GM10248 (cell line): ENCODE measurements at regions of chr17 and their contacts with region 1.

Region 1: GRCh38 chr17:49694847-49695683 is 12.7 kb downstream of the SLC35B1 start:
- DNase-seq: peak; percentile 68
- CTCF ChIP-seq: peak; percentile 78

Region 2: GRCh38 chr17:49548506-49549310 is 146.4 kb before region 1 on chr17:
- CTCF ChIA-PET with region 1: no interaction called
- POLR2A ChIA-PET with region 1: no interaction called
- DNase-seq: peak; percentile 64
- CTCF ChIP-seq: peak; percentile 76

Region 3: DNA sequence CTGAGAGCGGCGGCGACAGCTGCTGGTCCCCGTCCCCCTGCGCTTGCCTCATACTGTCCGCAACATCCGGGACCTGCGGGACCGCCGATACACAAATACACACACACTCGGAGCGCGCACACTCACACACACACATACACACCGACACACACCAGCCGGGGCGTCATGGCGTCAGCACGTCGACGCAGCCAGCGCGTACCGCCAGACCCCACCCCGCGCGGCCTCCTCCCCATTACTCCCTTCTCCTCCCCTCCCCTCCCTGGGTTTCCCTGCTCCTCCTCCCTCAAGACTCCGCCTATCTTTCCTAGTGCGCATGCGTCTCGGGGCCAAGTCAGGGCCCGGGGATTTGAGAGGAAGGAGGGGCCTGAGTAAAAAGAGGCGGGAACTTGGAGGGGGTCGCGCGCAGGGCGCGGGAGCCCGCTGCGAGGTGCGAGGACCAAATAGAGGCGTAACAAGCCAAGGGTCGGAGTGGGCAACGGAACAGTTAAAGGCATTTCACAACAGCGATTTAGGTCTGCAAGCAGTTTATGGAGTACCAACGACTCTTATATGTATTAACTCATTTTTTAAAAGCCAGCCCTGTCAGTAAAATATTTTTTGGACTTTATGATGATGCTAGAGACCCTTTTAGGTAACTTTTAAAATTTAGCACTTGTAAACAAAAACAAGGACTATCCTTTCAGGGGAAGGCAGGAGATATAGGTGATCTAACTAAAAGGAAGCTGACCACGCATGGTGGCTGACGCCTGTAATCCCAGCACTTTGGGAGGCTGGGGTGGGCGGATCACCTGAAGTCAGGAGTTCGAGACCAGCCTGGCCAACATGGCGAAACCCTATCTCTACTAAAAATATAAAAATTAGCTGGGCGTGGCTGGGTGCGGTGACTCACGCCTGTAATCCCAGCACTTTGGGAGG is 16.9 kb before region 1 on chr17 and contains the start of gene SPOP:
- CTCF ChIA-PET with region 1: interaction called, 13 read pairs
- POLR2A ChIA-PET with region 1: no interaction called
- DNase-seq: peak; percentile 98
- CTCF ChIP-seq: no peak

Region 4: DNA sequence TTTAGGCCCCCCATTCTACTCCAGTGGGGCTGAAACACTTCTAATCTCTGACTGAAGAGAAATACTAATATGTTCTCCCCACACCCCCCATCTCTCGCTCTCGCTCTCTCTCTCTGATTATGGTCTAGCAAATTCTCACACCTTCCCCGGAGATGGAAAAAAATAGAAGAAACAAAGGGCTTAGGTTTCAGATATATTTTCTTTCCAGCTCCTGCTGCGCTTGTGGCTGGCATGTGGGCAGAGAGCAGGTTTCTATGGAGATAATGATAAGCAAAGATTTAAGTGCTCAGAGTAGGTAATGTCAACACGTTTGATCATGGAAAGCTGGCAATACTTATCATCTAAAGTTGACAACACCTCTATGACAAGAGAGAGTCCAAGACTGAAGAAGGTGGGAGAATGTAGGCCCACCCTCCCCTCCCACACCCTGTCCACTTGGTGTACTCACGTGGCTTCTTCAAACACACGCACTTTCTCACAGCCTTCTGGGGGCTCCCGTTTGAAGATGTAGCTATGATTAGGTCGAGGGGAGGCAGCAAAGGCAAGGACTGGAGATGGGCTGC is 20.7 kb after region 1 on chr17:
- CTCF ChIA-PET with region 1: interaction called, 138 read pairs
- POLR2A ChIA-PET with region 1: interaction called, 4 read pairs
- DNase-seq: no peak
- CTCF ChIP-seq: no peak

Region 5: GRCh38 chr17:49748791-49749190 is 53.7 kb after region 1 on chr17:
- CTCF ChIA-PET with region 1: interaction called, 13 read pairs
- POLR2A ChIA-PET with region 1: no interaction called
- DNase-seq: peak; percentile 82
- CTCF ChIP-seq: no peak

Region 6: DNA sequence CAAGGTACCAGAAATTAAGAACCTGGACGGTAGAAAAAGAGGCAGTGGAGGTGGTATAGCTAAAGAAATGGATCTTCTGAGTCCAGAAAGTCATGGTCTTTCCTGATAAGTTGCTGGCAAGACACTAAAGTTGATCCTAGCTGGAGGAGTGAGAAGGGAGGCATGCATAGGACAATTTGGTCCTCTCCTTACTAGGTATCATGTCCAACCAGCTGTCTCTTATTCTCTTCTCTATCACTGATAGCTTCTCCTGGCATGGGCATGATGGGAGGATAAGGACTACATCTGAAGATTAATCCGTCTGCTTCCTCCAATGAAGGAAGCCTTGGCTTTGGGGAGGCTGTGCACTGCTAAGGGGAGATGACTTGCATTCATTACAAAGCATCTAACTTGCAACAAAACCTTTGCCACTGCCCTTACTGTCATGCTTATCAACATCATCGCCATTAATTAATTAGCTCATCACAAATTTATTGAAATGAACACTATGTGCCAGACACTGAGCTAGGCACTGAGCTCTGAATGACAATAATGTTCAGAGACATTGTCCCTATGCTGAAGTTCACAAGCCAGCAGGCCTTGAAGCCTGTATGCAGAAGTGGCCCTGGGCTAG is 72.0 kb after region 1 on chr17:
- CTCF ChIA-PET with region 1: no interaction called
- POLR2A ChIA-PET with region 1: no interaction called
- DNase-seq: no peak
- CTCF ChIP-seq: no peak